Breast epithelium (tissue), 4 donors: ENCODE measurements at regions of chrX and their contacts with region 1.

Region 1: GRCh38 chrX:70878902-70879301 is 29.6 kb downstream of the TEX11 start:
- DNase-seq: no peak
- H3K4me3 ChIP-seq: no peak overlapping the region
- H3K27ac ChIP-seq: no peak overlapping the region
- H3K4me1 ChIP-seq: no peaks in the 10 kb centered on the region
- H3K27me3 ChIP-seq: no peaks in the 10 kb centered on the region
- CTCF ChIP-seq: no peak
- POLR2A ChIP-seq: no peak

Region 2: GRCh38 chrX:69724307-69724706 is 1154.6 kb before region 1 on chrX:
- intact Hi-C with region 1: no loop called
- DNase-seq: no peak
- H3K4me3 ChIP-seq: no peak overlapping the region
- H3K27ac ChIP-seq: no peak overlapping the region
- H3K4me1 ChIP-seq: no peaks in the 10 kb centered on the region
- H3K27me3 ChIP-seq: peaks cover 0 to 10% of the 10 kb centered on the region in 2 donors
- CTCF ChIP-seq: no peak
- POLR2A ChIP-seq: no peak

Region 3: GRCh38 chrX:70656304-70656703 is 222.6 kb before region 1 on chrX:
- intact Hi-C with region 1: loop called (anchors 5 kb)
- DNase-seq: no peak
- H3K4me3 ChIP-seq: no peak overlapping the region
- H3K27ac ChIP-seq: no peak overlapping the region
- H3K4me1 ChIP-seq: no peaks in the 10 kb centered on the region
- H3K27me3 ChIP-seq: peaks cover 0 to 18% of the 10 kb centered on the region in 2 donors
- CTCF ChIP-seq: no peak
- POLR2A ChIP-seq: no peak